ENCODE measurements at regions of chr1 and their contacts with region 1.

Region 1: GRCh38 chr1:246809473-246809872 is 85.3 kb downstream of the SCCPDH start:
- DNase-seq: no peak
- H3K4me3 ChIP-seq: no peak overlapping the region
- H3K27ac ChIP-seq: no peak overlapping the region
- H3K4me1 ChIP-seq: peaks cover 4 to 10% (median 7%) of the 10 kb centered on the region in 4 experiments
- H3K27me3 ChIP-seq: no peaks in the 10 kb centered on the region
- CTCF ChIP-seq: 0 out of 4 replicates have a peak, but pooled peaks of 1 of the 3 experiments have one; percentile 6
- EP300 ChIP-seq: no peak
- POLR2A ChIP-seq: no peak
- RAD21 ChIP-seq: no peak

Region 2: GRCh38 chr1:246794835-246795671 is 14.4 kb before region 1 on chr1:
- CTCF ChIA-PET with region 1: interaction called, 4 read pairs
- POLR2A ChIA-PET with region 1: interaction called, 10 read pairs
- DNase-seq: no peak
- H3K4me3 ChIP-seq: no peak overlapping the region; a peak in 1 of 8 replicates
- H3K27ac ChIP-seq: peak overlapping the region; percentile 14; the same call in 1 of the 2 replicates
- H3K4me1 ChIP-seq: peaks cover 5 to 30% (median 27%) of the 10 kb centered on the region in 4 experiments
- H3K27me3 ChIP-seq: no peaks in the 10 kb centered on the region; a peak in 1 of 7 replicates
- CTCF ChIP-seq: no peak
- EP300 ChIP-seq: no peak
- POLR2A ChIP-seq: no peak
- RAD21 ChIP-seq: no peak

Region 3: GRCh38 chr1:246843876-246844275 is 34.4 kb after region 1 on chr1:
- CTCF ChIA-PET with region 1: no interaction called
- POLR2A ChIA-PET with region 1: no interaction called
- DNase-seq: no peak
- H3K4me3 ChIP-seq: no peak overlapping the region
- H3K27ac ChIP-seq: no peak overlapping the region
- H3K4me1 ChIP-seq: no peaks in the 10 kb centered on the region
- H3K27me3 ChIP-seq: no peaks in the 10 kb centered on the region
- CTCF ChIP-seq: no peak
- EP300 ChIP-seq: no peak
- POLR2A ChIP-seq: no peak
- RAD21 ChIP-seq: no peak

Region 4: GRCh38 chr1:246860401-246860800 is 50.9 kb after region 1 on chr1:
- CTCF ChIA-PET with region 1: no interaction called
- POLR2A ChIA-PET with region 1: no interaction called
- DNase-seq: no peak
- H3K4me3 ChIP-seq: no peak overlapping the region
- H3K27ac ChIP-seq: no peak overlapping the region
- H3K4me1 ChIP-seq: no peaks in the 10 kb centered on the region
- H3K27me3 ChIP-seq: no peaks in the 10 kb centered on the region
- CTCF ChIP-seq: no peak
- EP300 ChIP-seq: no peak
- POLR2A ChIP-seq: no peak
- RAD21 ChIP-seq: no peak

Region 5: DNA sequence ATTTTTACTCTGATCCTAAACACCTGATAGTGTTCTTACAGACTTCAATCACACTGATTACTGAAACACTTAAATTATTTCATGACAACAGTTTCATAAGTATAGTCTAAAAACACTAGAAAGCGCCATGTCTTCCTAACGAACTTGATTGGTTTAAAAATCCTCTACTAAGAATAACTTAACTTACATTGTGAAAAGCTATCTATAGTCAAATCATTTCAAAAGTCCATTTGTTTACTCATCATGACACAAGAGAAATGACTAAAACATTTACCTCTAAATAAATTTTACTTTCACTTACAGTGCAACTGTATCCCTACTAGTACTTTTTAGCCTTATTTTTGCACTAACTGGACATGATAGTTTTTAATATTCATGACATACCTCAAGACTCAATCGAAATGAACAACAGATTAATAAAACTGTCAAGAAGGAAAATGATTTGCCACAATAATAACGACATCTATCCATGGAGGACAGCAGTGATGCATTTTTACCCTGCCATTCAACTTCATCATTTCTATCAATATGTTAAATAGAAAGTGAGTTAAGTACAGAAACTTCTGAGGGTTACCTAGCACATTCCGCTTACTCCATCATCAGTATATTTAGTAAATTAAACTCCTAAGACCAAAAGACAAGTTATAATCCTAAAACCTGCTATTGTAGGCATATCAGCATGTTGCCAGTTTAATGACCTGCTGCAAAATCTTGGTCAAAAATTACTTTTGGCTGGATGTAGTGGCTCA is 83.9 kb after region 1 on chr1:
- CTCF ChIA-PET with region 1: no interaction called
- POLR2A ChIA-PET with region 1: no interaction called
- DNase-seq: no peak
- H3K4me3 ChIP-seq: no peak overlapping the region
- H3K27ac ChIP-seq: no peak overlapping the region
- H3K4me1 ChIP-seq: no peaks in the 10 kb centered on the region
- H3K27me3 ChIP-seq: no peaks in the 10 kb centered on the region
- CTCF ChIP-seq: no peak
- EP300 ChIP-seq: no peak
- POLR2A ChIP-seq: no peak
- RAD21 ChIP-seq: no peak